Sigmoid colon (tissue), 7 donors: ENCODE measurements at regions of chr12 and their contacts with region 1.

Region 1: GRCh38 chr12:68358532-68359485 is 26.6 kb upstream of the MDM1 start:
- DNase-seq: peak; percentile 80
- H3K4me3 ChIP-seq: no peak overlapping the region
- H3K27ac ChIP-seq: peak overlapping the region in 2 of 4 donors; percentile 54 to 68
- H3K4me1 ChIP-seq: peaks cover 0 to 23% (median 13%) of the 10 kb centered on the region in 4 donors
- H3K27me3 ChIP-seq: no peaks in the 10 kb centered on the region
- CTCF ChIP-seq: peak; percentile 37 to 71 (median 62)
- EP300 ChIP-seq: no peak
- POLR2A ChIP-seq: no peak

Region 2: DNA sequence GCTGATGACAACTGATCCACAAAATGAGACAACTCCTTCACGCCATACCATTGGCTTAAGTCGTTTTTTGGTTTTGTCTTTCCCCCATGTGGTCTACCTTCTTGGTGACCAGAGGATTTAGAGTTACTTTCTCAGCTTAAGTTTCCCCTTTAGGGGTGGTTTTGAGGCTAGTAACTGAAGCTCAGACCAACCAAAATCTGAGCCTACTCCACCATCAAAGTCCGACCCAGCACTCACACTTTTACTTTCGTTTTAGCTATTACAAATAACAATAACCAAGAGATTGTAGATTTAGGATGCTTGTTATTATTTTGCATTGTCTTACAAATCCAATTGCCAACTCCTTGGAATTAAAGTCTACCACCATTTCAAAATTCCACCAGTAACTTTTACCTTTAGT is 104.0 kb after region 1 on chr12:
- intact Hi-C with region 1: no loop called
- DNase-seq: no peak
- H3K4me3 ChIP-seq: no peak overlapping the region
- H3K27ac ChIP-seq: no peak overlapping the region
- H3K4me1 ChIP-seq: peaks cover 0 to 17% (median 9%) of the 10 kb centered on the region in 4 donors
- H3K27me3 ChIP-seq: no peaks in the 10 kb centered on the region
- CTCF ChIP-seq: no peak
- EP300 ChIP-seq: no peak
- POLR2A ChIP-seq: no peak

Region 3: DNA sequence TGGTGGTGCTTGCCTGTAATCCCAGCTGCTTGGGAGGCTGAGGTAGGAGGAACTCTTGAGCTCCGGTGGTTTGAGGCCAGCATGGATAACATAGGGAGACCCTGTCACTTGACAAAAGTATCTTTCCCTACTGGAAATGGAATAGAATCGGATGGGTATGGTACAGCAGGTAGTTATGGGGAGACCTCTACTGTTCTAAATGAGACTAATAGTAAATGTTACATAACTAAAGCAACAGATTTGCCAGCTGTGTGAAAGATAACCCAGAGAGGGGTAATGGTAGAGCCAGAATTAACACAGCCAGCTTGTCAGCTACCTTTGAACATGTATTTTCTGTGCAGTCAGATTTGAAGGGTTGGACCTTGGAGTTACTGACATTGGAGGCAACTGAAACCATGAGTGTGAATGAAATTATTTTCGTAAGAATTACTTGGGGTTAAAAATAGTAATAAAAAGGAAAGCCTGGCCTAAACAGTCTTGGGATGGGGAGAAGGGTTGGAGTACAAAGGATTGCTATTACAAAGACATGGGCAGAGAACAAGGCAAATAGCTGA is 306.3 kb after region 1 on chr12:
- intact Hi-C with region 1: loop called (anchors 5 kb)
- DNase-seq: no peak
- H3K4me3 ChIP-seq: no peak overlapping the region
- H3K27ac ChIP-seq: peak overlapping the region in 1 of 4 donors; percentile 20
- H3K4me1 ChIP-seq: peaks cover 0 to 7% (median 0%) of the 10 kb centered on the region in 4 donors
- H3K27me3 ChIP-seq: no peaks in the 10 kb centered on the region
- CTCF ChIP-seq: no peak
- EP300 ChIP-seq: no peak
- POLR2A ChIP-seq: no peak

Region 4: GRCh38 chr12:68745904-68746571 is 387.2 kb after region 1 on chr12 and contains the start of gene SLC35E3:
- intact Hi-C with region 1: loop called (anchors 5 kb)
- DNase-seq: peak; percentile 95
- H3K4me3 ChIP-seq: peak within 1 kb of the TSS; percentile 63 to 77 (median 66)
- H3K27ac ChIP-seq: peak within 1 kb of the TSS; percentile 79 to 83 (median 82)
- H3K4me1 ChIP-seq: peaks cover 0 to 21% (median 18%) of the 10 kb centered on the region in 4 donors
- H3K27me3 ChIP-seq: no peaks in the 10 kb centered on the region
- CTCF ChIP-seq: no peak
- EP300 ChIP-seq: no peak
- POLR2A ChIP-seq: peak; percentile 6 to 83
- total RNA-seq, gene SLC35E3: 1.1 to 5.3 (median 2.6) TPM